ENCODE measurements at regions of chrX and their contacts with region 1.

Region 1: GRCh38 chrX:120499301-120500072 is 30.4 kb upstream of the LAMP2 start:
- DNase-seq: no peak
- ATAC-seq: peak; percentile 39 to 55 (median 40)
- H3K4me3 ChIP-seq: no peak overlapping the region
- H3K27ac ChIP-seq: no peak overlapping the region
- H3K4me1 ChIP-seq: no peaks in the 10 kb centered on the region
- H3K27me3 ChIP-seq: no peaks in the 10 kb centered on the region
- CTCF ChIP-seq: no peak
- POLR2A ChIP-seq: no peak

Region 2: GRCh38 chrX:120664081-120664480 is 164.6 kb after region 1 on chrX:
- intact Hi-C with region 1: loop called in 1 of 2 experiments (anchors 10 kb)
- DNase-seq: no peak
- ATAC-seq: peak in 1 of 4 donors; percentile 33
- H3K4me3 ChIP-seq: no peak overlapping the region
- H3K27ac ChIP-seq: no peak overlapping the region
- H3K4me1 ChIP-seq: no peaks in the 10 kb centered on the region
- H3K27me3 ChIP-seq: no peaks in the 10 kb centered on the region
- CTCF ChIP-seq: peak; percentile 36 to 50 (median 42)
- POLR2A ChIP-seq: no peak

Measured in right lobe of liver (tissue), 6 donors.